HEK293 (cell line): ENCODE measurements at regions of chr10 and their contacts with region 1.

Region 1: DNA sequence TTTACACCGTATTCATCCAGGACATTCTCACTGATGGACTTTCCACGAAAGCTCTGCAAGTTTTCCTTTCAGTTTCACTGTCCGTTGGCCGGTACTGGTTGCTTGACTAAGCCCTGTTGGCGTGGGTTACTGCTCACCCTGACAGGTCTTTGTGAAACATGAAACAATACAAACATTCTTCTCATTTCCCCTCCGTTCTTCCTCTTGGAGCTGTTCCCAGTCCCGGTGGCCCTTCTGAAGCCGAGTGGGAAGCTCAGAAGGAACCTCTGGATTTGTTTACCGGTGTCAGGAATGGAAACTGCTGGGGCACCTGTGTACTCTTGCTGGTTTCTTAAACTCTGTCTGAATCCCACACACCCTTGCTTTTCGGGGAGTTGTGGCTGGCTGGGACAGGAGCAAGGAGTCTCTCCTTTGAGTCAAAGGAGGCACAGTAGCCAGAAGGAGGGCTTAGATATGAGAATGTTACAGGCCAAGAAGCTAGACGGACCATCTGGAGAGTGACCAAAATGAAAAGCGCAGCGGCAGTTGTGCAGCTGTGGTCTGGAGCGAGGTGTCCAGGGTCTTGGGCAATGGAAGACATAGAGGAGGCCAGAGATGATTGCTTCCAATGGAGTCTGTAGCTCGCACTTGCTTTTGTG is 45.7 kb downstream of the LYZL2 start:
- H3K4me3 ChIP-seq: no peak overlapping the region
- H3K27ac ChIP-seq: no peak overlapping the region
- H3K4me1 ChIP-seq: no peaks in the 10 kb centered on the region
- CTCF ChIP-seq: no peak

Region 2: GRCh38 chr10:30392564-30392990 is 191.3 kb before region 1 on chr10:
- CTCF ChIA-PET with region 1: interaction called, 111 read pairs
- POLR2A ChIA-PET with region 1: no interaction called
- H3K4me3 ChIP-seq: no peak overlapping the region
- H3K27ac ChIP-seq: no peak overlapping the region
- H3K4me1 ChIP-seq: no peaks in the 10 kb centered on the region
- CTCF ChIP-seq: peak; percentile 86

Region 3: DNA sequence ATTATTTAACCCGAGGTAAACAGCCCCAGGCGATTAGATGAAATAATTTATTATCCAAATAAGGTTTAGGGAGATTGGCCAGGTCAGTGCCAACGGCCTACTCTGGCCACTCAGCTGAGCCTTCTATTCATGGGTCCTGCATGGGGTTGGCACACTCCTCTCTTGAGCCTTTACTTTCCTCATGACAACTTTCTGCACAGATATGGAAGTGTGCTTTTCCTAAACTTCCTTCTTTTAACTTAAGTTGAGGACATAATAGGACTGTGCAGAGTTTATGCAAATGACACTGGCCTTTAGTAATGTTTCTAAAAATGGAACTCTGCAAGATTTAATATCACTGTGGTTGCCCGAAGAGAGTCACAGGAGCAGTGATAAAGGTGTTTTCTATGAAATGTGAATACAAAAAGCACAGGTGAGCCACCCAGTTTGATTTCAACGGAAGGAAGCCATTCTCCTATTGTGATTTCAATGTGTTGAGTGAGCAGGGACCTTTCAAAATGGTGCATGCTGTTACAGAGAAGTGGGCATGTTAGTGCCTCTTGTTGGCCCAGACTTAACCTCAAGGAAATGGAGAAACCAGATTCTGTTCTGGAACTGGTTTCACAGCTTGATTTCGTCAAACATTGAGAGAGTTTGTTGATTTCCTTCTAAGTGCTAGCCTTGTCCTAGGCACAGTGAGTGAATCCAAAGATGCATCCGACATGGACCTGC is 10.0 kb before region 1 on chr10:
- CTCF ChIA-PET with region 1: interaction called, 22 read pairs
- POLR2A ChIA-PET with region 1: no interaction called
- H3K4me3 ChIP-seq: no peak overlapping the region
- H3K27ac ChIP-seq: no peak overlapping the region
- H3K4me1 ChIP-seq: no peaks in the 10 kb centered on the region
- CTCF ChIP-seq: no peak

Region 4: GRCh38 chr10:30600005-30600404 is 16.1 kb after region 1 on chr10:
- CTCF ChIA-PET with region 1: interaction called, 10 read pairs
- POLR2A ChIA-PET with region 1: no interaction called
- H3K4me3 ChIP-seq: no peak overlapping the region
- H3K27ac ChIP-seq: no peak overlapping the region
- H3K4me1 ChIP-seq: no peaks in the 10 kb centered on the region
- CTCF ChIP-seq: no peak

Region 5: GRCh38 chr10:30763918-30764317 is 180.0 kb after region 1 on chr10:
- CTCF ChIA-PET with region 1: no interaction called
- POLR2A ChIA-PET with region 1: no interaction called
- H3K4me3 ChIP-seq: no peak overlapping the region
- H3K27ac ChIP-seq: no peak overlapping the region
- H3K4me1 ChIP-seq: no peaks in the 10 kb centered on the region
- CTCF ChIP-seq: no peak

Region 6: GRCh38 chr10:31090894-31091607 is 507.2 kb after region 1 on chr10:
- CTCF ChIA-PET with region 1: no interaction called
- POLR2A ChIA-PET with region 1: no interaction called
- H3K4me3 ChIP-seq: no peak overlapping the region
- H3K27ac ChIP-seq: no peak overlapping the region
- H3K4me1 ChIP-seq: no peaks in the 10 kb centered on the region
- CTCF ChIP-seq: no peak